GM12878 (cell line): ENCODE measurements at regions of chr2 and their contacts with region 1.

Region 1: GRCh38 chr2:9095690-9096351 is 92.3 kb upstream of the MBOAT2 start:
- DNase-seq: no peak
- ATAC-seq: no peak
- H3K4me3 ChIP-seq: no peak overlapping the region
- H3K27ac ChIP-seq: no peak overlapping the region
- H3K4me1 ChIP-seq: peaks cover 42% of the 10 kb centered on the region
- H3K27me3 ChIP-seq: no peaks in the 10 kb centered on the region
- CTCF ChIP-seq: 0 out of 6 replicates have a peak, but pooled peaks of 1 of the 3 experiments have one; percentile 5
- EP300 ChIP-seq: no peak
- POLR2A ChIP-seq: no peak
- RAD21 ChIP-seq: no peak

Region 2: GRCh38 chr2:8986327-8986976 is 109.4 kb before region 1 on chr2:
- CTCF ChIA-PET with region 1: interaction called, 28 read pairs
- POLR2A ChIA-PET with region 1: interaction called, 9 read pairs
- RAD21 ChIA-PET with region 1: interaction called, 52 read pairs
- SMC1A ChIA-PET with region 1: interaction called, 36 read pairs
- in situ Hi-C with region 1: no loop called
- intact Hi-C with region 1: loop called (anchors 5 kb)
- DNase-seq: no peak
- ATAC-seq: peak; percentile 65
- H3K4me3 ChIP-seq: no peak overlapping the region
- H3K27ac ChIP-seq: no peak overlapping the region
- H3K4me1 ChIP-seq: peaks cover 23% of the 10 kb centered on the region
- H3K27me3 ChIP-seq: no peaks in the 10 kb centered on the region
- CTCF ChIP-seq: peak; percentile 38 to 69 (median 52); a peak in 5 of 6 replicates
- EP300 ChIP-seq: no peak
- POLR2A ChIP-seq: no peak
- RAD21 ChIP-seq: 0 out of 2 replicates have a peak, but pooled peaks have one; percentile 10

Region 3: DNA sequence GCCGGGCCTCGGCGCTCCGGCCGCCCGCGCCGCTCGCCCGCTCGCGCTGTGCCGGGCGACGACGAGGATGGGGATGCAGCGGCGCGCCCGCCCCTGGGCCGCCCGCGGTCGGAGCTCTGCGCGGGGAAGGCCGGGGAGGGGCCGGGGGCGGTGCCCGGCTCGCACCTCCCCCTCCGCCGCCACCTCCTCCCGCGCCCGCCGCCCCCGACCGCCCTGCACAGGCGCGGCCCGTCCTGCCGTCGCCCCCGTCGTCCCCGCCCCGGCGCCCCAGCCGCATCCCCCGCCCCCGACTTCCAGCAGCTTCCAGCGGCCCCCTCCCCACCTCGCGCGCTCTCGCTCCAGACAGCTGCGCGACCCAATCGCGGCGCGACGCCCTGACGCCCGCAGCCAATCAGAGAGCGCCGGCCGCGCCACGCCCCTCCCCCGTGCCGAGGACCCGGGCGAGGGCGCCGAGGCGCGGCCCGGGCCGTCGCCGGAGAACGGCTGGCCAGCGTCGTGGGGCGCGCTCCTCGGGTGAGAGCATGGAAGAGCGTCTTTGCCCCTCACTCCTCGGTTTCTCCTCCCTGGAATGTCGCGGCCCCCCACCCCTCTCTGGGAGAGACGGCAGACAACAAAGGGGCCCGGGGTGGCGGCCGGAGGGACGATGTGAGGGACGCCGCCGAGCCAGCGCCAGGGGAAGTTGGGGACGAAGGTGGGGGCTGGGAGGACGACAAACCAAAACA is 92.0 kb before region 1 on chr2 and contains the start of gene MBOAT2:
- CTCF ChIA-PET with region 1: interaction called, 5 read pairs
- POLR2A ChIA-PET with region 1: interaction called, 5 read pairs
- RAD21 ChIA-PET with region 1: interaction called, 15 read pairs
- SMC1A ChIA-PET with region 1: interaction called, 18 read pairs
- in situ Hi-C with region 1: no loop called
- intact Hi-C with region 1: loop called (anchors 5 kb)
- DNase-seq: peak; percentile 43
- ATAC-seq: peak; percentile 92
- H3K4me3 ChIP-seq: peak within 1 kb of the TSS; percentile 71
- H3K27ac ChIP-seq: peak within 1 kb of the TSS; percentile 66
- H3K4me1 ChIP-seq: no peaks in the 10 kb centered on the region; the same call in 1 of the 2 replicates
- H3K27me3 ChIP-seq: no peaks in the 10 kb centered on the region; a peak in 1 of 4 replicates
- CTCF ChIP-seq: no peak
- EP300 ChIP-seq: no peak
- POLR2A ChIP-seq: peak; percentile 79
- RAD21 ChIP-seq: no peak
- polyA plus RNA-seq, gene MBOAT2: 0.08 to 1.3 TPM

Region 4: DNA sequence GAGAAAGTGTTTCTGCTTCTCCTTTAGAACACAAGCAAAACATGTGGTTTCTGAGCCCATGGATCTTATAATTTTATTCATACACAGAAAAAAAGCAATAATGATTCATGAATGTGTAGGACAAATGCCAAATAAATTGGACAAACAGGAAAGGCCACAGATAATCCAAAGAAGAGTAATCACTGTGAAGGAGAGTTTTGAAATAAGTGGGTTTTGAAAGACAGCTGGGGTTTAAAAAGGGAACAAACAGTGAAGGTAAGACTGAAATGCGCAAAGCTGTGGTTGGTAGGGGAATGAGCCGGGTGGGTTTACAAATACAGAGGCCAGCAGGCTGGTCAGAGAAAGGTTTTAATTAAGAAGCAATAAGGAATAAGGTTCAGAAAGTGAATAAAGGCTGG is 42.3 kb before region 1 on chr2:
- CTCF ChIA-PET with region 1: interaction called, 3 read pairs
- POLR2A ChIA-PET with region 1: interaction called, 10 read pairs
- RAD21 ChIA-PET with region 1: interaction called, 16 read pairs
- SMC1A ChIA-PET with region 1: interaction called, 16 read pairs
- in situ Hi-C with region 1: no loop called
- intact Hi-C with region 1: loop called (anchors 2 kb)
- DNase-seq: no peak
- ATAC-seq: peak; percentile 87
- H3K4me3 ChIP-seq: no peak overlapping the region
- H3K27ac ChIP-seq: no peak overlapping the region
- H3K4me1 ChIP-seq: no peaks in the 10 kb centered on the region; the same call in 1 of the 2 replicates
- H3K27me3 ChIP-seq: no peaks in the 10 kb centered on the region
- CTCF ChIP-seq: no peak
- EP300 ChIP-seq: no peak
- POLR2A ChIP-seq: no peak
- RAD21 ChIP-seq: no peak

Region 5: DNA sequence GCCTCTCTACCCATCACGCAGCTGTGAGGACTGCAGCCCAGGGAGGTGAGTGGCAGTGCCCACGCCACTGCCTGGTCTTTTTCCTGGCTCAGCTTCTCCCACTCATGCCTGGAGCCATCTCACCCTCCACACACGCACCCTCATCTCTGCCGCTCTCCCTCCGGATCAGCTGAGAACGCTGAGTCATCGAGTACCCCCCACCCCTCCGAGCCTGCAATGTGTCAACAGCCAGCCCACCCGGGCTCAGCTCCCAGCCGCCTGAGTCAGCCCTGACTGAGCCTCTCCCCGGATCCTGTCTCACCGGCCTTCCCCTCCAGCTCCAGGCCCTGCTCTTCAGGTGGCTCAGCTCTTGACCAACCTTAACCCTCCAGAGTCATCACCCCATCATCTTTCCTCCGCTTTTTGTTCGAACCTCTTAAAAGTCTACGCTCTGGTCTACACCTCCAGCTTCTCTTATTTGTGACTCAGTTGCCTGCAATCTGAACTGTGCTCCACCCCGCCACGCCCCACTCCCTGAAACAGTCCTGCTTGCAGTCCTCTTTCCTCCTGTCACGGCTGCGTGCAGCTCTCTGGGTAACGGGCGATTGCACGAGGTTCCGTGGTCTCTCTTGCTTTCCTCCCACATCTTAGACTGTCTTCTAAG is 16.4 kb after region 1 on chr2:
- CTCF ChIA-PET with region 1: interaction called, 10 read pairs
- POLR2A ChIA-PET with region 1: no interaction called
- RAD21 ChIA-PET with region 1: interaction called, 7 read pairs
- SMC1A ChIA-PET with region 1: interaction called, 11 read pairs
- in situ Hi-C with region 1: no loop called
- intact Hi-C with region 1: no loop called
- DNase-seq: no peak
- ATAC-seq: no peak
- H3K4me3 ChIP-seq: no peak overlapping the region
- H3K27ac ChIP-seq: no peak overlapping the region
- H3K4me1 ChIP-seq: no peaks in the 10 kb centered on the region
- H3K27me3 ChIP-seq: no peaks in the 10 kb centered on the region; a peak in 1 of 4 replicates
- CTCF ChIP-seq: no peak
- EP300 ChIP-seq: no peak
- POLR2A ChIP-seq: no peak
- RAD21 ChIP-seq: no peak